Heart right ventricle (tissue), 16 donors: ENCODE measurements at regions of chr10 and their contacts with region 1.

Region 1: DNA sequence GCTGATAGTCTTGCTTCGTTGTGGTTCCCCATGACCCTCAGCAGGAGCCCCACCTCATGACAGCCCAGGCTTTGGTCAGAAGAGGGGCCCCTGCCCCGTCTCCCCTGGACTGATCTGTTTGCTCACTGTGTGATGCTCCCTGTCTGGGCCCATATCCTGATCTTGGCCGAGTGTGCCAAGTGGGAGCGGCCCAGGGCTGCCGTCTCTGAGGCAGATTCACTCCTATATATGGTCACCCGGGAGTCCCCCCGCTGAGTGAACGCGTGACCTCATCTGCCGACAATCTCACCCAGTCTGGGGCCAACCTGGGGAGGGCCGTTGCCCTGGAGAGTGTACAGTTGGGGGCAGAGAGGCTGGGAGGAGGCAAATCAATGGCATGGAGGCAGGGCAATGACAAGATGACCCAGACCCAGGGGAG is 34.5 kb downstream of the PPIF start:
- DNase-seq: peak; percentile 62 to 76
- ATAC-seq: peak; percentile 61 to 84 (median 74)
- H3K4me3 ChIP-seq: no peak overlapping the region
- H3K27ac ChIP-seq: peak overlapping the region; percentile 9 to 78 (median 74)
- H3K4me1 ChIP-seq: peaks cover 31 to 43% (median 40%) of the 10 kb centered on the region in 9 donors
- H3K27me3 ChIP-seq: no peaks in the 10 kb centered on the region
- CTCF ChIP-seq: no peak

Region 2: DNA sequence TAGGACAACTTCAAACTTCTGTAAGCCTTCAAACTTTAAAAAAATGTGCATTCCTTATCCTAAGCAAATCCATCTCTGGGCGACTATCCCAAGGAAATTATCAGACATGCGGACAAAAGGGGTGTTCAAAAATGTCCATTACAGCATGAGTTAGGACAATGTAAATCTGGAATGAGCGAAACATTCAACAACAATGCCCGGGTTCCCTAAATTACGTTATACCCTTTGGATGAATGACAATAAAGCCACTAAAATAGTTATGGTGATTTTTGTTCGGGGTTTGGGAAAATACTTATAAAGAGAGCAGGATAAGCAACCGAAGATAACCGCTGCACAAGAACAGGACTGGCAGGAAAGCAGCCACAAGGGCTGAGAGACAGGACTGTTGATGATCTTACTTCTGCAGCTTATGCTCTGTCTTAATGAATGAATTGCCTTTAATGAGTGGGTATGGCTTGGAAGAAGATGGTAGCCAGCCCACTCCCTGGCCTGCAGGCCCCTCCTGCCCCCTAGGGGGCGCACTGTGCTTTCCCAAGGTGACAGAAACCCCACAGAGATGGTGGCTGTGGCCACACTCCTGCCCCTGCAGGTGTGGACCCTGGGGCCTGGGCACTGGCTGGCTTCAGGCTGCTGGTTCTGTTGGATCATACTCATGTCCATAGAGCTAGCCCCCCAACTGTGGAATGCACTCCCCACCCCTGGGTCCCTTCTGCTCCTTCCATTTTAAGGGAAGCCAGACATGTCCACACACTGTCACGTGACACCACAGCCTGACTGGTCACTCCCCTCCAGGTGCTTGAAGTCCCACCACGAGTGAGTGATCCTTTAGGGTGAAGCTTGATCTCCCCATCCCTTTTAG is 18.6 kb after region 1 on chr10:
- intact Hi-C with region 1: no loop called
- DNase-seq: peak in 1 of 2 donors; percentile 64
- ATAC-seq: no peak
- H3K4me3 ChIP-seq: no peak overlapping the region
- H3K27ac ChIP-seq: peak overlapping the region in 9 of 10 donors; percentile 80 to 92 (median 88)
- H3K4me1 ChIP-seq: peaks cover 0 to 94% (median 0%) of the 10 kb centered on the region in 9 donors
- H3K27me3 ChIP-seq: no peaks in the 10 kb centered on the region
- CTCF ChIP-seq: peak; percentile 39 to 78 (median 66)

Region 3: GRCh38 chr10:79454259-79454658 is 72.4 kb after region 1 on chr10:
- intact Hi-C with region 1: loop called in 2 of 10 experiments (anchors 5 kb)
- DNase-seq: no peak
- ATAC-seq: peak in 2 of 8 donors; percentile 29 to 77
- H3K4me3 ChIP-seq: no peak overlapping the region
- H3K27ac ChIP-seq: no peak overlapping the region
- H3K4me1 ChIP-seq: peaks cover 0 to 6% (median 0%) of the 10 kb centered on the region in 9 donors
- H3K27me3 ChIP-seq: no peaks in the 10 kb centered on the region
- CTCF ChIP-seq: no peak

Region 4: GRCh38 chr10:79487296-79488194 is 105.7 kb after region 1 on chr10:
- intact Hi-C with region 1: loop called in 5 of 10 experiments (anchors 5 kb)
- DNase-seq: peak; percentile 41 to 59
- ATAC-seq: peak; percentile 20 to 77 (median 46)
- H3K4me3 ChIP-seq: no peak overlapping the region
- H3K27ac ChIP-seq: peak overlapping the region in 7 of 10 donors; percentile 18 to 81 (median 65)
- H3K4me1 ChIP-seq: peaks cover 2 to 45% (median 11%) of the 10 kb centered on the region in 9 donors
- H3K27me3 ChIP-seq: no peaks in the 10 kb centered on the region
- CTCF ChIP-seq: peak; percentile 55 to 85 (median 77)